Caco-2 (cell line): ENCODE measurements at regions of chr20 and their contacts with region 1.

Region 1: GRCh38 chr20:56358596-56359211 is at the start of gene FAM210B:
- DNase-seq: peak; percentile 96 to 97
- H3K4me3 ChIP-seq: peak within 1 kb of the TSS; percentile 86
- H3K4me3 Mint-ChIP-seq: peak within 1 kb of the TSS; percentile 87
- H3K27ac Mint-ChIP-seq: peak within 1 kb of the TSS; percentile 11
- H3K4me1 ChIP-seq: no peaks in the 10 kb centered on the region
- H3K4me1 Mint-ChIP-seq: no peaks in the 10 kb centered on the region
- H3K27me3 ChIP-seq: no peaks in the 10 kb centered on the region
- H3K27me3 Mint-ChIP-seq: peaks cover 3% of the 10 kb centered on the region
- CTCF ChIP-seq: no peak
- total RNA-seq, gene FAM210B: 20.5 and 21.1 TPM in 2 replicates

Region 2: DNA sequence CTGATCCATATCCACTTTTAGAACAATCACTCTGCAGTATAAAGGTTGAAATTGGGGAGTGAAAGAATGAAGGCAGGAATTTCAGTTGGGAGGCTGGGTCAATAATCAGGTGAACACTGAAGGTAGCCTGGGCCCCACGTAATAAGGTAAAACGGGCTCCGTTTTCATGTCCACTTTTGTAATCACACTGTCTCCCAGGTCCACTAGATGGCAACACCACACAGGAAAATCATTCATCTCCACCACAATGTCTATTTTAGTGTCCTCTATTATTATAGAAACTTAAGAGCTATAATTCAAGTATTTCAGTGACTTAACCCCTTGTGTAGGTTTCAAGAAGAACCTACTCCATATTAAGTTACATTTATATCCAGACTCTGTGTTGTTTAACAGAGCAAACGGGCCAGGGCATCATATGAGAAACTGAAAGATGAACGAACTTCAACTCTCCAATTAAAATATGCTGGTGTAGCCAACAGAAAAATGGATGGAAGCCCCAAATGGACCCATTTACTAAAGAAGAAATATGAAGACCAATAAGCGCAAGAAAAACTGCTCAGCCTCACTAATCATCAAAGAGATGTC is 156.1 kb before region 1 on chr20:
- CTCF ChIA-PET with region 1: no interaction called
- POLR2A ChIA-PET with region 1: no interaction called
- intact Hi-C with region 1: loop called (anchors 5 kb)
- DNase-seq: peak in 1 of 2 experiments; percentile 39
- H3K4me3 ChIP-seq: no peak overlapping the region
- H3K4me3 Mint-ChIP-seq: no peak overlapping the region
- H3K27ac Mint-ChIP-seq: no peak overlapping the region
- H3K4me1 ChIP-seq: no peaks in the 10 kb centered on the region; the same call in 1 of the 2 replicates
- H3K4me1 Mint-ChIP-seq: no peaks in the 10 kb centered on the region
- H3K27me3 ChIP-seq: no peaks in the 10 kb centered on the region
- H3K27me3 Mint-ChIP-seq: no peaks in the 10 kb centered on the region
- CTCF ChIP-seq: peak; percentile 60 to 69

Region 3: GRCh38 chr20:56247948-56248782 is 110.5 kb before region 1 on chr20 and contains the start of gene MC3R:
- CTCF ChIA-PET with region 1: interaction called, 5 read pairs
- POLR2A ChIA-PET with region 1: no interaction called
- intact Hi-C with region 1: loop called (anchors 5 kb)
- DNase-seq: peak; percentile 86
- H3K4me3 ChIP-seq: no peak within 1 kb of the TSS
- H3K4me3 Mint-ChIP-seq: no peak within 1 kb of the TSS
- H3K27ac Mint-ChIP-seq: no peak within 1 kb of the TSS
- H3K4me1 ChIP-seq: no peaks in the 10 kb centered on the region
- H3K4me1 Mint-ChIP-seq: no peaks in the 10 kb centered on the region
- H3K27me3 ChIP-seq: no peaks in the 10 kb centered on the region
- H3K27me3 Mint-ChIP-seq: peaks cover 33% of the 10 kb centered on the region
- CTCF ChIP-seq: peak; percentile 92 to 99
- total RNA-seq, gene MC3R: not detected in 2 replicates

Region 4: GRCh38 chr20:56259948-56260347 is 98.8 kb before region 1 on chr20:
- CTCF ChIA-PET with region 1: no interaction called
- POLR2A ChIA-PET with region 1: no interaction called
- intact Hi-C with region 1: loop called (anchors 5 kb)
- DNase-seq: no peak
- H3K4me3 ChIP-seq: no peak overlapping the region
- H3K4me3 Mint-ChIP-seq: no peak overlapping the region
- H3K27ac Mint-ChIP-seq: no peak overlapping the region
- H3K4me1 ChIP-seq: peaks cover 5% of the 10 kb centered on the region; the same call in 1 of the 2 replicates
- H3K4me1 Mint-ChIP-seq: no peaks in the 10 kb centered on the region
- H3K27me3 ChIP-seq: no peaks in the 10 kb centered on the region; the same call in none of the 2 replicates
- H3K27me3 Mint-ChIP-seq: peaks cover 27% of the 10 kb centered on the region
- CTCF ChIP-seq: no peak

Region 5: GRCh38 chr20:56348308-56348700 is 10.4 kb before region 1 on chr20:
- CTCF ChIA-PET with region 1: no interaction called
- POLR2A ChIA-PET with region 1: interaction called, 10 read pairs
- intact Hi-C with region 1: loop called (anchors 1 kb)
- DNase-seq: peak; percentile 59 to 68
- H3K4me3 ChIP-seq: no peak overlapping the region
- H3K4me3 Mint-ChIP-seq: peak overlapping the region; percentile 40
- H3K27ac Mint-ChIP-seq: peak overlapping the region; percentile 6
- H3K4me1 ChIP-seq: peaks cover 16% of the 10 kb centered on the region
- H3K4me1 Mint-ChIP-seq: peaks cover 15% of the 10 kb centered on the region
- H3K27me3 ChIP-seq: no peaks in the 10 kb centered on the region
- H3K27me3 Mint-ChIP-seq: no peaks in the 10 kb centered on the region
- CTCF ChIP-seq: no peak

Region 6: GRCh38 chr20:56468316-56469082 is 109.8 kb after region 1 on chr20 and contains the start of gene RTF2:
- CTCF ChIA-PET with region 1: no interaction called
- POLR2A ChIA-PET with region 1: no interaction called
- intact Hi-C with region 1: no loop called
- DNase-seq: peak; percentile 96 to 99
- H3K4me3 ChIP-seq: peak within 1 kb of the TSS; percentile 67
- H3K4me3 Mint-ChIP-seq: peak within 1 kb of the TSS; percentile 100
- H3K27ac Mint-ChIP-seq: peak within 1 kb of the TSS; percentile 100
- H3K4me1 ChIP-seq: no peaks in the 10 kb centered on the region; the same call in 1 of the 2 replicates
- H3K4me1 Mint-ChIP-seq: peaks cover 10% of the 10 kb centered on the region
- H3K27me3 ChIP-seq: no peaks in the 10 kb centered on the region
- H3K27me3 Mint-ChIP-seq: peaks cover 3% of the 10 kb centered on the region
- CTCF ChIP-seq: no peak
- total RNA-seq, gene RTF2: 146 and 157 TPM in 2 replicates